ENCODE measurements at regions of chr11 and their contacts with region 1.

Region 1: DNA sequence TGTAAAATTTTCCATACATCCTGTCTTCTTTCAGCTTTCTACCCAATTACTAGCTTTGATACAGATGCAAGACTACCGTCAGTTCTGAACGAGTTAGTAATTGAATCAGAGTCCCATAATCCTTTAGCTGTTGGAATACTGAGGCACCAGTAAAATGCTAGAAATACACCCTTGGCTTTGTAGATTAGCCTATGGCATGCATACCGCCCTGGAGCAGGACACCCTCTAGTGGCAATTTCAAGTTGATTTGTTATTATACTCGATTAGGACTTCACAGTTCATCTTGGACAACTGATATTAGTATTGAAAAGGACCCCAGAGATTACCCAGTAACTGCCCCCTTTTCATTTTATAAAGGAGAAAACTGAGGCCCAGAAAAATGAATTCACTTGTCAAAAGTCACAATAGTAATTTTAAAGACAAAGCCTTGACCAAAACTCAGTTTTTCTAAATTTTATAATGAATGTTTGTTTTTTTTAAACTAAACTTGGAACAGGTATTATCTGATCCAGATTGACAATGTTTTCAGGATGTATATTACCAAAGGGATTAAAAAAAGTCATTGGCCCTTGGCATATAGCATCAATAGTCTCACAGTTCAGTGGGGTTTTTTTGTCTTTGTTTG is 72.6 kb downstream of the HIPK3 start:
- DNase-seq: peak; percentile 50
- ATAC-seq: peak; percentile 85
- H3K4me3 ChIP-seq: no peak overlapping the region
- H3K27ac ChIP-seq: no peak overlapping the region
- H3K4me1 ChIP-seq: no peaks in the 10 kb centered on the region
- H3K27me3 ChIP-seq: no peaks in the 10 kb centered on the region
- CTCF ChIP-seq: peak; percentile 67
- EP300 ChIP-seq: no peak
- POLR2A ChIP-seq: no peak
- RAD21 ChIP-seq: peak; percentile 50

Region 2: DNA sequence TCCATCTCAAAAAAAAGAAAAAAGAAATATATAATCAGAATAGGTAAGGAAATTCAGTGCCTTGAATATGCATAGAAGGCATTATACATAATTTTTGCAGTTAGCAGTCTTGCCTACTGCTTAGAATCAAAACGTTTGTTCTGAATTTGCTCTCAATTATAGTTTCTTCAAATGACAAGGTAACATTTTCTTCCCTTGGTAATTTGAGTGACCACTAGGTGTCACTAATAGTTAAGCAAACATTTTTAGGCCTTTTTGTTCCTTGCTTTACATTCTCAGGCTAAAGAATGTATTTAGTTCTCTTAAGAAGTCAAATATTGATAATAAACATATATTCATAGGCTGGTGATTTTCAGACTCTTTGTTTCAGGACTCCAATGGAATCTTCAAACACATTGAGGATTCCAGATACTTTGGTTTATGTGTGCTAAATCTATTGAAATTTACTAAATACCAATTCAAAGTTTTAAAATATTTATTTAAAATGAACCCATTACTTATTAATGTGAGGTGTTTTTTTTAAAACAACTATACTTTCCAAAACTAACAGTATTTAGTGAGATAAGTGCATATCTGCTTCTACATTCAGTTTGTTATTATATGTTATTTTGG is 369.2 kb before region 1 on chr11:
- CTCF ChIA-PET with region 1: no interaction called
- POLR2A ChIA-PET with region 1: no interaction called
- in situ Hi-C with region 1: no loop called
- intact Hi-C with region 1: loop called (anchors 5 kb)
- DNase-seq: peak; percentile 52
- ATAC-seq: no peak
- H3K4me3 ChIP-seq: no peak overlapping the region
- H3K27ac ChIP-seq: no peak overlapping the region
- H3K4me1 ChIP-seq: no peaks in the 10 kb centered on the region
- H3K27me3 ChIP-seq: no peaks in the 10 kb centered on the region
- CTCF ChIP-seq: peak; percentile 66
- EP300 ChIP-seq: no peak
- POLR2A ChIP-seq: no peak
- RAD21 ChIP-seq: peak; percentile 29; the same call in 1 of the 2 replicates

Region 3: GRCh38 chr11:33172996-33173395 is 156.8 kb before region 1 on chr11:
- CTCF ChIA-PET with region 1: no interaction called
- POLR2A ChIA-PET with region 1: no interaction called
- in situ Hi-C with region 1: loop called (anchors 5 kb)
- intact Hi-C with region 1: no loop called
- DNase-seq: peak; percentile 32
- ATAC-seq: peak; percentile 97
- H3K4me3 ChIP-seq: no peak overlapping the region
- H3K27ac ChIP-seq: no peak overlapping the region
- H3K4me1 ChIP-seq: peaks cover 5% of the 10 kb centered on the region; the same call in 1 of the 2 replicates
- H3K27me3 ChIP-seq: no peaks in the 10 kb centered on the region
- CTCF ChIP-seq: no peak
- EP300 ChIP-seq: no peak
- POLR2A ChIP-seq: no peak
- RAD21 ChIP-seq: no peak

Region 4: GRCh38 chr11:33257897-33258630 is 71.8 kb before region 1 on chr11:
- CTCF ChIA-PET with region 1: interaction called, 5 read pairs
- POLR2A ChIA-PET with region 1: no interaction called
- in situ Hi-C with region 1: no loop called
- intact Hi-C with region 1: loop called (anchors 5 kb)
- DNase-seq: peak; percentile 63
- ATAC-seq: peak; percentile 74
- H3K4me3 ChIP-seq: peak overlapping the region; percentile 98 to 100 (median 99)
- H3K27ac ChIP-seq: peak overlapping the region; percentile 98
- H3K4me1 ChIP-seq: peaks cover 42% of the 10 kb centered on the region
- H3K27me3 ChIP-seq: no peaks in the 10 kb centered on the region; a peak in 2 of 5 replicates
- CTCF ChIP-seq: peak; percentile 46
- EP300 ChIP-seq: no peak
- POLR2A ChIP-seq: peak; percentile 56 to 80
- RAD21 ChIP-seq: peak; percentile 28; the same call in 1 of the 2 replicates